Ascending aorta (tissue), 2 donors: ENCODE measurements at regions of chr11 and their contacts with region 1.

Region 1: DNA sequence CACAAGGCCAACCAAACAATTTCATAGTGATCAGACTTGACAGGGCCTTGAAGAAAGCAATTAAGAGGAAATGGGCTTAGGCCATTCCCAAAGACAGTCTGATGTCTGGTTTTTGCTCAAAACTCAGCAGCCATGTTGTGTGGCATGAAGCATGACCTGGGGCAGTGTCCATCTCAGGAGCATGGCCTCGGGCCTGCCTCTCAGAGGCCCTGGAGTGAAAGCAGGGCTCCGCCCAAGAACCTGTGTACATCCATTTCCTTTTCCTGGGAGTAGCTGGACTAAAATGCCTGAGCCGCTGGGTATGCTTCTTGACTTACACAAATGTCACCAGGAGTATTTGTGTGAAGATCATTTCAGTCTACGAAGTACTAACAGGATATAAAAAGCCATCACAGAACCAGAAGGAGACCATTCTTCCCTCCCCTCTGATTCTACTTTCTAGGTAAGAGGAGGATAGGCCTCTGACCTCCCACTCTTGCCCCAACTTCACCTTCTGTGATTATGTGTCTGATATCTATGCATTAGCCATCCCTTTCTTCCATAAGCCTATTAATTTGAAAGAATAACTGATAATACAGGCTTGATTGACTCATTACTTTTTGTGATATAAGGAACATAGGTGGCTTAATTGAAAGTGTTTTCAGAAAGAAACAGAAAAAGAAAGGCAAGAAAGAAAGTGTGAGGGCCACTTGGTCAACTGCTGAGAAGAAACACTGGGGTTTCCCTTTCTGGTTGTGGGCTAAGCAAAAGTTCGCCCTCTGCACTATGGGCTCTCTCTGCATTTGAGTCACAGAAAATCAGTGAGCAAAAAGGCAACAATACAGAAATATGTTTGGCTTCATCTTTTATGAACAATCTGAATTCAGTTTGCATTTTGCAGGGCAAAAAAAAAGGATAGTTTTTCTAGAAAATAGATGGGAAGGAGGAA is 188.6 kb upstream of the MTMR2 start:
- DNase-seq: no peak
- H3K4me3 ChIP-seq: peak overlapping the region in 1 of 2 donors; percentile 26
- H3K27ac ChIP-seq: peak overlapping the region; percentile 81 to 89
- H3K4me1 ChIP-seq: peaks cover 7 to 16% of the 10 kb centered on the region in 2 donors
- H3K27me3 ChIP-seq: no peaks in the 10 kb centered on the region
- CTCF ChIP-seq: no peak

Region 2: GRCh38 chr11:94741022-94741679 is 1371.3 kb before region 1 on chr11:
- intact Hi-C with region 1: no loop called
- DNase-seq: no peak
- H3K4me3 ChIP-seq: peak overlapping the region; percentile 74
- H3K27ac ChIP-seq: no peak overlapping the region
- H3K4me1 ChIP-seq: peaks cover 4 to 5% of the 10 kb centered on the region in 2 donors
- H3K27me3 ChIP-seq: no peaks in the 10 kb centered on the region
- CTCF ChIP-seq: peak; percentile 23 to 52 (median 47)

Region 3: GRCh38 chr11:95877291-95877690 is 235.2 kb before region 1 on chr11:
- intact Hi-C with region 1: no loop called
- DNase-seq: no peak
- H3K4me3 ChIP-seq: no peak overlapping the region
- H3K27ac ChIP-seq: no peak overlapping the region
- H3K4me1 ChIP-seq: no peaks in the 10 kb centered on the region
- H3K27me3 ChIP-seq: no peaks in the 10 kb centered on the region
- CTCF ChIP-seq: no peak

Region 4: GRCh38 chr11:96054870-96055705 is 57.4 kb before region 1 on chr11:
- intact Hi-C with region 1: loop called (anchors 5 kb)
- DNase-seq: no peak
- H3K4me3 ChIP-seq: no peak overlapping the region
- H3K27ac ChIP-seq: peak overlapping the region; percentile 67 to 75
- H3K4me1 ChIP-seq: peaks cover 4 to 35% of the 10 kb centered on the region in 2 donors
- H3K27me3 ChIP-seq: no peaks in the 10 kb centered on the region
- CTCF ChIP-seq: peak; percentile 43 to 63 (median 46)

Region 5: GRCh38 chr11:96143016-96143670 is 30.7 kb after region 1 on chr11:
- intact Hi-C with region 1: loop called (anchors 2 kb)
- DNase-seq: no peak
- H3K4me3 ChIP-seq: no peak overlapping the region
- H3K27ac ChIP-seq: no peak overlapping the region
- H3K4me1 ChIP-seq: peaks cover 0 to 17% of the 10 kb centered on the region in 2 donors
- H3K27me3 ChIP-seq: no peaks in the 10 kb centered on the region
- CTCF ChIP-seq: no peak

Region 6: GRCh38 chr11:96155627-96156378 is 43.3 kb after region 1 on chr11:
- intact Hi-C with region 1: no loop called
- DNase-seq: peak; percentile 26 to 85
- H3K4me3 ChIP-seq: peak overlapping the region in 1 of 2 donors; percentile 9
- H3K27ac ChIP-seq: peak overlapping the region; percentile 64 to 66
- H3K4me1 ChIP-seq: peaks cover 0 to 50% of the 10 kb centered on the region in 2 donors
- H3K27me3 ChIP-seq: no peaks in the 10 kb centered on the region
- CTCF ChIP-seq: peak in 1 of 3 experiments; percentile 18